ENCODE measurements at regions of chr17 and their contacts with region 1.

Region 1: DNA sequence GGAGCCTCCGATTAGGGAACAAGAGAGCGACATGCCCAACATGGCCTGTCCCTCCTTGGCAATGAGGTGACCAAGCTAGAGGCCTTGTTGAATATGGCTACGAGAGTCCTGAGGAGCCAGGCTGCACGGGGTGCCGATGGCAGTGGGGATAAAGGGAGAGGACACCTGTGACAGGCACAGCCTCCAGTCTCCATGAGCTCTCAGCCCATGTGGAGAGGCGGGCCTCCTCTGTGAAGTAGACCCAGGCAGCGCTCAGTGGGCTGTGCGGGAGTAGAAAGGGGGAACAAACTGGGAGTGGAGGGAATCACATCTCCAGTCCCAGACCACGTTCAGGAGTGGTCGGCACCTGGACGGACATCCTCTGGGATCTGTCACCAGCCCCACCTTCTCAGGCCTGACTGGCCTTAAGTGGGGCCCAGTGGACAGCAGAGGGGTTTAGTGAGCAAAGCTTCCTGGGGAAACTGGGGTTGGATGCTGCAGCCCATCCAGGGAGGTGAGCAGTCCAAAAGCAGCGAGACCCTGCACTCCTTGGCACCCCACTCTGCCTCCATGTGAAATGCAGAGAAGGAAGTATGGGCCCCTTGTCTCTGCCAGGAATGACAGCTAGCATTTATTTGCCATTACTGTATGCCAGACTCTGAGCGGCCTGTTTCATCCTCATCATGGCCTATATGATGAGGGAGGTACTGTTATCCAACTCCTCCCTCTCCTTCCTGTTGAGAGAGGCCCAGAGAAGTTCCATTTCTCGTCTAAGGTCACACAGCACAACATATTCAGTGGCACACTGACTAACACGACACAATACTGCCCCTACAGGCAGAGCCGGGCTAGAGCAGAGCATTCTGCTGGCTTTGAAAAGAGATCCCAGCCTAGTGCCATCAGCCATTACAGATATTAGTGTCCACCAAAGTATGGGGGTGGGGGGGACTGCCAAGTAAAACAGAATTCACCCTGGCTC is 4.5 kb upstream of the TMEM92 start:
- DNase-seq: peak; percentile 87
- H3K4me3 ChIP-seq: no peak overlapping the region
- H3K27ac ChIP-seq: peak overlapping the region in 1 of 2 experiments; percentile 42; a peak in 1 of 4 replicates
- H3K4me1 ChIP-seq: peaks cover 35 to 53% of the 10 kb centered on the region in 2 experiments; a peak in 3 of 4 replicates
- H3K27me3 ChIP-seq: no peaks in the 10 kb centered on the region
- CTCF ChIP-seq: peak; percentile 99
- EP300 ChIP-seq: no peak
- RAD21 ChIP-seq: peak; percentile 97

Region 2: DNA sequence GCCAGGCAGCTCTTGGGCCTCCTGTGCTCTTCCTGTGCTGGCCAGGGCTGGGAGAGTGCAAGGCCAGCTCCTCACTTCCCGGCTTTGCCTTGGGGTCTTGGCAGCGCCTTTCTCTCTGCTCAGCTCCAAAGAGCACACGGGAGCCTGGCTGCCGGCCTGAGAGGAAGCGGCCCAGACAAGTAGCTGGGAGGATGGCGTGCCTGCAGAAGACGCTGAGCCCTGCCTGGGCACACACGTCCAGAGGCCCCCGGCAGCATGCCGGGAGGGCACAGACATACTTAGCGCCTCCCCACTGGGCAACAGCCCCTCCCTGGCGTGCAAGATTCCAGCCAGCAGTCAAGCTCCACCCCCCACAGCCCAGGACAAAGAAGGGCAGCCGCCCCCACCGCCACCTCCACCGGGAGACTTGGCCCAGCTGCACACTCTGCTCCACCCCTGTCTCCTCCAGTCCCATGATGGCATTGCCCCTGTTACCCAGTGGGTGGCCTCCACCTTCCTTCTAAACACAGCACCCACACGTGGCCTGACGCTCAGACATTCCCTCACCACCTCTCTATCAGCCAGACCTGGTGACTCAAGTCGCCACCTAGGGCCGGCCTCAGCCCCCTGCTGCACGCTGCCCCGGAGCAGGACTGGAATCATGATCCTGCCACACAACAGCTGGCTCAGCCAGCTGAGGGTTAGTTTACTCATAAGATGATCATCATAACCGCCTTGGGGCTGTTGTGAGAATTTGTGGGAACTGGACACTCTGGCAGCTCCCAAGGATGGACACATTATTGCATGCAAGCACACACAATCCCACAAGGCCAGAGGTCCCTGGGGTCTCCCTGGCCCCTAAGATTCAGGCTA is 91.5 kb before region 1 on chr17:
- CTCF ChIA-PET with region 1: interaction called, 22 read pairs
- POLR2A ChIA-PET with region 1: no interaction called
- DNase-seq: peak; percentile 93
- H3K4me3 ChIP-seq: peak overlapping the region in 1 of 2 experiments; percentile 15; a peak in 1 of 4 replicates
- H3K27ac ChIP-seq: peak overlapping the region; percentile 94 to 100
- H3K4me1 ChIP-seq: peaks cover 29 to 52% of the 10 kb centered on the region in 2 experiments; a peak in 3 of 4 replicates
- H3K27me3 ChIP-seq: no peaks in the 10 kb centered on the region
- CTCF ChIP-seq: peak; percentile 77
- EP300 ChIP-seq: peak; percentile 27 to 36; a peak in 2 of 4 replicates
- RAD21 ChIP-seq: peak; percentile 53

Region 3: DNA sequence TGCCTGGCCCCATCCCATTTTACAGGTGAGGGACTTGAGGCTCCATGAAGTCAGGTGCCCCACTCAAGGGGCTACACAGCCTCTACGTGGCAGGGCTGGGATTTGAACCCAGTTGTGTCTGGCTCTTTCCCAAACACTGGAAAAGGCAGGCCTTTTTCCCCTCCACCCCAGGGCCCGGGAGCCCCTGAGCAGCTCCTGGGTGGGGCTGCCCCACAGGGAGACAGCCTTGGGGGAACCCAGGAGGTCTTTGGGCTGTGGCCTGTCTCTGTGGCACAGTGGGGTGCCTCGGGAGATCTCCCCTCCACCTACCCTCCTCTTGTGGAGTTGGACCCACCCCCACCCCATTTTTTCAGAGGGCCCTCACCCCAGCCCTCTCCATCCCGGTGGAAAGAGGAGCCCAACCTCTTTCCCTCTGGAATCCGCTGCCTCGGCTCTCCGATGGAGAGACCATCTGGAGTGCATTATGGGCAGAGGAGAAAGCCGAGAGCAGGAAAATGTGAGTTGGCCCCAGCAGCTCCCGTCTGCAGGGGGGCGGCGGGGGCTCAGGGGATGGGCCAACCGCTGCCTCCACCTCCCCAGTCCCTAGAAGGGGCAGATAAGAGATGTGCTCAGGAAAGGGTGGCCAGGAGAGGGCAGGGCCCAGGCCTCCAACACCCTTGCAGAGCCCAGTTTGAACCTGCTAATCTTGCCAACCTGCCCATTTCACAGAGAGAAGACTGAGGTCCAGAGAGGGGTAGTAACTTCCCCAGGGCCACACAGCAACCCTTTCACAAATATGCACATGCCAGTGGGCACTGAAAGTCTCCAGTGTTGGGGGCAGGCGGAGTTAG is 10.9 kb before region 1 on chr17:
- CTCF ChIA-PET with region 1: interaction called, 28 read pairs
- POLR2A ChIA-PET with region 1: interaction called, 3 read pairs
- DNase-seq: peak; percentile 85
- H3K4me3 ChIP-seq: no peak overlapping the region
- H3K27ac ChIP-seq: peak overlapping the region; percentile 3 to 44; a peak in 3 of 4 replicates
- H3K4me1 ChIP-seq: peaks cover 9 to 23% of the 10 kb centered on the region in 2 experiments; a peak in 3 of 4 replicates
- H3K27me3 ChIP-seq: no peaks in the 10 kb centered on the region
- CTCF ChIP-seq: 0 out of 2 replicates have a peak, but pooled peaks have one; percentile 10
- EP300 ChIP-seq: peak in 1 of 2 experiments; percentile 70; a peak in 1 of 4 replicates
- RAD21 ChIP-seq: no peak

Region 4: GRCh38 chr17:50289991-50290702 is 20.4 kb after region 1 on chr17:
- CTCF ChIA-PET with region 1: interaction called, 351 read pairs
- POLR2A ChIA-PET with region 1: no interaction called
- DNase-seq: no peak
- H3K4me3 ChIP-seq: peak overlapping the region in 1 of 2 experiments; percentile 18; a peak in 2 of 4 replicates
- H3K27ac ChIP-seq: peak overlapping the region in 1 of 2 experiments; percentile 79; a peak in 2 of 4 replicates
- H3K4me1 ChIP-seq: peaks cover 0 to 27% of the 10 kb centered on the region in 2 experiments; a peak in 3 of 4 replicates
- H3K27me3 ChIP-seq: no peaks in the 10 kb centered on the region
- CTCF ChIP-seq: no peak
- EP300 ChIP-seq: no peak; a peak in 1 of 4 replicates
- RAD21 ChIP-seq: no peak

Region 5: DNA sequence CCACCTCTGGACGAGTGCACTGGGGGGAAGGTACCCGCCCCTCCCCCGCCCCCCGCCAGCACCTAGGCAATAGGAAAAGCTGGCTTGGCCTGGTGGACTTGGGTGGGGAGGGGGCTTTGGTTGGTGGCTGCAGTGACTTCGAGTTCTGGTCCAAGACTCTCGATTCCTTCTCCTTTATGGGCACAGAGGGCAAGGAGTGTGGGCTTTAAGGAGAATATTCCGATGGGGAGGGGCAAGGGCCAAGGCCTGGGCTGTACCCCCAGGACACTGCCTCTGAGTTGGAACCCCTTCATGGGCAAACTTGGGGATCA is 156.7 kb after region 1 on chr17:
- CTCF ChIA-PET with region 1: no interaction called
- POLR2A ChIA-PET with region 1: no interaction called
- DNase-seq: no peak
- H3K4me3 ChIP-seq: peak overlapping the region; percentile 69 to 71
- H3K27ac ChIP-seq: peak overlapping the region; percentile 39 to 70
- H3K4me1 ChIP-seq: peaks cover 21 to 23% of the 10 kb centered on the region in 2 experiments; a peak in 3 of 4 replicates
- H3K27me3 ChIP-seq: no peaks in the 10 kb centered on the region
- CTCF ChIP-seq: no peak
- EP300 ChIP-seq: no peak
- RAD21 ChIP-seq: no peak

Measured in SK-N-SH (cell line).